ENCODE measurements at regions of chr17 and their contacts with region 1.

Region 1: GRCh38 chr17:49997791-49998703 is 3.0 kb upstream of the DLX3 start:
- DNase-seq: peak; percentile 50
- H3K4me3 ChIP-seq: no peak overlapping the region
- H3K27ac ChIP-seq: no peak overlapping the region
- H3K27me3 ChIP-seq: peaks cover 65% of the 10 kb centered on the region
- CTCF ChIP-seq: peak; percentile 90

Region 2: GRCh38 chr17:49850774-49851386 is 147.2 kb before region 1 on chr17:
- CTCF ChIA-PET with region 1: interaction called, 249 read pairs
- POLR2A ChIA-PET with region 1: no interaction called
- DNase-seq: no peak
- H3K4me3 ChIP-seq: peak overlapping the region; percentile 63
- H3K27ac ChIP-seq: no peak overlapping the region
- H3K27me3 ChIP-seq: peaks cover 19% of the 10 kb centered on the region
- CTCF ChIP-seq: no peak

Region 3: DNA sequence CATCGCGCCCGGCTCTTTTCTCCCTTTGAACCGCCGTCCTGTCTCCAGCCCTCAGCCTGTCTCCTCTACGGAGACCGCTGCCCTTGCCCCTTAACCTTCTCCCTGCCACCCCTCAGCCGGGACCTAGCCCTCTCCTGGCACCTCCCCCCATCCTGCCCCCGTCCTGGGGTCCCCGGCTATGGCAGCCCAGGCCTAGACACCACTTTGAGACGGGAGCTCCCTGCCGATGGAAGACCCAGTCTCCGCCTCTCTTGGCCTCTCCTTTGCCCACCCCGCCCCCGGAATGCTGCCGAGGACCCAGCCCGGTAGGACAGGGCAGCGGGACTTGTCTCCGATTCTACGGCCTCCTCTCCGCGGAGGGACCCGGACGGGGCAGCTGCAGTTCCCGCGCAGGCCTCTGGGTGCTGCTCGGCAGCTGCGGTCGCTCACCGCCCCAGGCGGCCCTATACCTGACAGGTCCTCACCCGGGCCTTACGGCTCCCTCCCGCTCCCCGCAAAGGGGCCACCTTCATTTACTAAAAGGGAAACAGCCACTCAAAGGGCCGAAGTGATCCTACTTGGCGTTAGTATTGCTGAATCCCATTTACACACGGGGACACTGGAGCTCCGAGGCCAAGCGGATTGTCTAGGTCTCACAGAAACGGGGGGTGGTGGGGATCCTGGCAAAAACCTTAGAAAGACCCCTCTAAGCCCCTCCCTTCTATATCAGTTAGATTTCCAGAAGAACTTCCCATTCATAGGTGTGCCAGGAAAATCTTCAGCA is 117.6 kb before region 1 on chr17:
- CTCF ChIA-PET with region 1: interaction called, 32 read pairs
- POLR2A ChIA-PET with region 1: no interaction called
- DNase-seq: peak; percentile 13
- H3K4me3 ChIP-seq: no peak overlapping the region
- H3K27ac ChIP-seq: no peak overlapping the region
- H3K27me3 ChIP-seq: peaks cover 57% of the 10 kb centered on the region
- CTCF ChIP-seq: peak; percentile 93

Region 4: DNA sequence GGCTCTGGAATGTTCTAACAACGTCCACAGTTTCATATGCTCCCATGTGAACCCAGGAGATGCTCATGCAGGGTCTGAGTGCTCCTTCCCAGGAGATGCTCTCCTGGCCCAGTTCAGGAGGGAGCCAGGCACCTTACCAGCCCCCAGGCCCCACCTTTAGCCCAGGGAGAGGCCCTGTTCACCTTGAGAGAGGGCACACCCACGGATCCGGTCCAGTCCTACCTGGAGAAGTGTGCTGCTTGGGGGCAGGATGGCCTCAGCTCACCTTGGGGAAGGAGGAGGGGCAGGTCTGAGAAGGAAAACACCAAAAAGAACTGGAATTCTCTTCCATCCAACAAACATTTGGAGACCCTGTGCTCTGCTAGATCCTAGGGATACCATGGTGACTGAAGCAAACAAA is 22.9 kb before region 1 on chr17:
- CTCF ChIA-PET with region 1: interaction called, 9 read pairs
- POLR2A ChIA-PET with region 1: interaction called, 18 read pairs
- DNase-seq: no peak
- H3K4me3 ChIP-seq: no peak overlapping the region
- H3K27ac ChIP-seq: no peak overlapping the region
- H3K27me3 ChIP-seq: peaks cover 92% of the 10 kb centered on the region
- CTCF ChIP-seq: no peak

Region 5: GRCh38 chr17:50020841-50021599 is 23.0 kb after region 1 on chr17:
- CTCF ChIA-PET with region 1: interaction called, 30 read pairs
- POLR2A ChIA-PET with region 1: no interaction called
- DNase-seq: no peak
- H3K4me3 ChIP-seq: no peak overlapping the region
- H3K27ac ChIP-seq: no peak overlapping the region
- H3K27me3 ChIP-seq: peaks cover 3% of the 10 kb centered on the region
- CTCF ChIP-seq: no peak

Region 6: GRCh38 chr17:50238601-50239280 is 240.7 kb after region 1 on chr17:
- CTCF ChIA-PET with region 1: no interaction called
- POLR2A ChIA-PET with region 1: no interaction called
- DNase-seq: no peak
- H3K4me3 ChIP-seq: no peak overlapping the region
- H3K27ac ChIP-seq: no peak overlapping the region
- H3K27me3 ChIP-seq: no peaks in the 10 kb centered on the region
- CTCF ChIP-seq: no peak

Measured in AG04450 (cell line).